PC-3 (cell line): ENCODE measurements at regions of chr9 and their contacts with region 1.

Region 1: DNA sequence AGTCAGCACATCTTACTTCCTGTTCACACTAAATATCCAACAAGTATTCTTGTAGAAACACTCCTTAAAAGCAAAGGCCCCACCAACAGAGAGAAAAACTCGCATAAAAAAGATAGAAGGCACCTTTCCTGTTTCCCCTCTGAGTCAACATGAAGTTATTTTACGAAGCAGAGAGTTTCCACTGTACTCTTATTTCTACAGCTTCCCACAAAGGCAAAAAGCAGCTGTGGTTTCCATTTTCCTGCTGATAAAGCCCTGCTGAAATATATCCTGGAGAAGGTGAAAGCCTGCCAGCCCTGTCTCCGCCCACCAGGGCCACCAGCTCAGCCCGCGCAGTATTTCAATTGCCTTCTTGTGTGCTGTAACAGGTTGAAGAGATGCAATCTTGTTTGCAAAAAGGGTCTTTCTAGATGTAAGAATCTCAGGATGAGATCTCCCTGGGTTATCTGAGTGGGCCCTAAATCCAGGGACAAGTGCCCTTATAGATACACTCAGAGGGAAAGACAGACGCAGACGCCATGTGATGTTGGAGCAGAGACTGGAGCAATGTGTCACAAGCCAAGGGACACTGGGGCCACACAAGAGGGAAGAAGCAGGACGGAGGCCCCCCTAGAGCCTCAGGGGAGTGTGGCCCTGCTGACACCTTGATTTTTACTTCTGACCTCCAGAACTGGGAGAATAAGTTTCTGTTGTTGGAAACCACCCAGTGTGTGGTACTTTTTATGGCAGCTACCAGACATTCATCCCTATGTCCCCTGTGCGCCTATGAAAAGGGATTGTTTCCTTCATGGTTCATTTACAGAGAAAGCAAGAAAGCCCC is 19.9 kb downstream of the SEMA4D start:
- DNase-seq: peak; percentile 71
- ATAC-seq: peak; percentile 91
- H3K4me3 ChIP-seq: peak overlapping the region; percentile 26
- H3K27ac ChIP-seq: peak overlapping the region; percentile 69
- H3K4me1 ChIP-seq: peaks cover 22% of the 10 kb centered on the region
- H3K27me3 ChIP-seq: no peaks in the 10 kb centered on the region
- CTCF ChIP-seq: no peak

Region 2: DNA sequence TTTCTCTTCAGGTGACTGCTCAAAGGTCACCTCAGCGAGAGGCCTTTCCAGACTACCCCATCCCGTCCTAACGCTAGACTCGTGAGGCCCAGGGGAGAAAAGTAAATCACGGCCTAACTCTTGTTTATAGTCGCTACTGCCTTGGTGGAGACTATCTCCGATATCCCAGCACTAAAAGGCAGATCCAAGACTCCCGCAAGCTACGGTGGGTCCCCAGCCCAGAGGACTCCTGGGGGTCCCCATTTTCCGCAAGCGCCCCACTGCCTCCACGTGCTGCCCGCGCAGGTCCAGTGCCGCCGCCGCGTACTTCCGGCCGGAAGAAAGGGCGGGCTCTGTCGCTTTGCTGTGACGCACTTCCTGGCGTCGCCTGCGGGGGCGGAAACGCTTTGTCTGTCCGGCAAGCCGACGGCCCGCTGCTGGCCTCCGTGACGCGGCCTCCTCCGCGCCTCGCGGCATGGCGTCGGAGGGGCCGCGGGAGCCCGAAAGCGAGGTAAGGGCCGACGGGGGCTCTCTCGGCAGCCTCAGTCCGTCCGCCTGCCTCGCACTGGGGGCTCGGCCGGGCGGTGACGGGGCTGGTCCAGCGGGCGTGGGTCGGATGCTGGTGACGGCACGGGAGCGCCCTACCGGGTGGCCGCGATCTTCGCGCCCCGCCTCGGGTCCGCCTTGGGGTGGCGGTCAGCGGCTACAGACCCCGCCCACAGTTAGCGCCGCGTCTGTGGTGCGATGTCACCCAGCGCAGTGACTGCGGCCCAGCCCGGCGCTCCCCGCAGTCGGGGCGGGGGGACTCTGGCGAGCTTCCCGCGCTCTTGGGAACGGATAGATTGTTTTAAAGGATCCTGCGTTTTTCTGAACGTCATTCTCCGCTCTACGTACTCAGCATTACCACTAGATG is 159.7 kb before region 1 on chr9 and contains the start of gene SECISBP2:
- CTCF ChIA-PET with region 1: no interaction called
- POLR2A ChIA-PET with region 1: no interaction called
- intact Hi-C with region 1: loop called (anchors 1 kb)
- DNase-seq: peak; percentile 91
- ATAC-seq: peak; percentile 95
- H3K4me3 ChIP-seq: peak within 1 kb of the TSS; percentile 74
- H3K27ac ChIP-seq: peak within 1 kb of the TSS; percentile 96
- H3K4me1 ChIP-seq: peaks cover 37% of the 10 kb centered on the region
- H3K27me3 ChIP-seq: no peaks in the 10 kb centered on the region
- CTCF ChIP-seq: peak; percentile 76
- total RNA-seq, gene SECISBP2: 14.4 and 15.7 TPM in 2 replicates

Region 3: DNA sequence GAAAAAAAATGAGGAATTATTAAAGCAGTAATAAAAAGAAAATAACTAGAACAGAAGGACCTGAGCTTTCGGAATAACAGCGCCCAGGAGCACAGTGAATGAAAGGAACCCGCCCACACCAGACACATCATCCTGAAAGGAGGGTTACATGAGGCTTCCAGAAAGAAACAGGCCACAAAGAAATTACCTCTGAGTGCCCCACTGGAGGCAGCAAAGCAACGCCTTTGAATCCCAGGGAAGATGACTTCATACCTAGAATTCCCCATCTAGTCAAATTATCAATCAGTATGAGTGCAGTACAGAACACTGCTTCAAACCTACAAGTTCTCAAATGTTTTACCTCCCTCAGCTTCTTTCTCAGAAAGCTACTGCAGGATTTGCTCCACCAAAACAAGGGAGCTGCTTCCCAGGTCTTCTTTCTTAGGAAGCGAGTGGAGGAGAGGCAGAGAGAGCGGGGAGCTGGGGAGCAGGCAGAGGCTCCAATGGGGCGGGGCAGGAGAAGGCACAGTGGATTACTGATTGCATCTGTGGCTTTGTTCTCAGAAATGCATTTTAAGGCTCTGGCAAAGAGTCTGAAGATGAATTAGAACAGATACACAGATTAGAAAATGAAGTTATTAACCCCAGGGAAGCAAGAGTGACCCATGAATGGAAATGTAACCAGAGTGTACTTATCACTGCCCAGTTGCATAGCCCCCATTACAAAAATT is 67.2 kb before region 1 on chr9:
- CTCF ChIA-PET with region 1: no interaction called
- POLR2A ChIA-PET with region 1: no interaction called
- intact Hi-C with region 1: loop called (anchors 2 kb)
- DNase-seq: peak; percentile 22
- ATAC-seq: peak; percentile 30; the same call in 1 of the 2 replicates
- H3K4me3 ChIP-seq: no peak overlapping the region
- H3K27ac ChIP-seq: no peak overlapping the region
- H3K4me1 ChIP-seq: no peaks in the 10 kb centered on the region
- H3K27me3 ChIP-seq: no peaks in the 10 kb centered on the region
- CTCF ChIP-seq: peak; percentile 43

Region 4: GRCh38 chr9:89602978-89603766 is 125.2 kb after region 1 on chr9:
- CTCF ChIA-PET with region 1: no interaction called
- POLR2A ChIA-PET with region 1: no interaction called
- intact Hi-C with region 1: no loop called
- DNase-seq: peak; percentile 79
- ATAC-seq: peak; percentile 8; the same call in 1 of the 2 replicates
- H3K4me3 ChIP-seq: peak overlapping the region; percentile 32; the same call in 1 of the 2 replicates
- H3K27ac ChIP-seq: no peak overlapping the region
- H3K4me1 ChIP-seq: peaks cover 18% of the 10 kb centered on the region
- H3K27me3 ChIP-seq: peaks cover 30% of the 10 kb centered on the region
- CTCF ChIP-seq: peak; percentile 82